ENCODE measurements at regions of chr1 and their contacts with region 1.

Region 1: GRCh38 chr1:241275981-241276380 is 81.0 kb downstream of the RGS7 start:
- DNase-seq: no peak
- H3K4me3 ChIP-seq: no peak overlapping the region
- H3K27ac ChIP-seq: no peak overlapping the region
- H3K4me1 ChIP-seq: no peaks in the 10 kb centered on the region
- H3K27me3 ChIP-seq: no peaks in the 10 kb centered on the region
- CTCF ChIP-seq: no peak
- POLR2A ChIP-seq: no peak

Region 2: GRCh38 chr1:241331328-241332036 is 55.5 kb after region 1 on chr1:
- intact Hi-C with region 1: loop called (anchors 2 kb)
- DNase-seq: no peak
- H3K4me3 ChIP-seq: no peak overlapping the region
- H3K27ac ChIP-seq: no peak overlapping the region
- H3K4me1 ChIP-seq: no peaks in the 10 kb centered on the region
- H3K27me3 ChIP-seq: no peaks in the 10 kb centered on the region
- CTCF ChIP-seq: no peak
- POLR2A ChIP-seq: no peak

Region 3: GRCh38 chr1:242568666-242569065 is 1292.7 kb after region 1 on chr1:
- intact Hi-C with region 1: no loop called
- DNase-seq: no peak
- H3K4me3 ChIP-seq: no peak overlapping the region
- H3K27ac ChIP-seq: no peak overlapping the region
- H3K4me1 ChIP-seq: no peaks in the 10 kb centered on the region
- H3K27me3 ChIP-seq: no peaks in the 10 kb centered on the region
- CTCF ChIP-seq: no peak
- POLR2A ChIP-seq: no peak

Measured in breast epithelium (tissue), 4 donors.